Posterior vena cava (tissue), 2 donors: ENCODE measurements at regions of chr1 and their contacts with region 1.

Region 1: GRCh38 chr1:3170561-3171453 is 101.8 kb downstream of the PRDM16 start:
- DNase-seq: peak; percentile 89

Region 2: DNA sequence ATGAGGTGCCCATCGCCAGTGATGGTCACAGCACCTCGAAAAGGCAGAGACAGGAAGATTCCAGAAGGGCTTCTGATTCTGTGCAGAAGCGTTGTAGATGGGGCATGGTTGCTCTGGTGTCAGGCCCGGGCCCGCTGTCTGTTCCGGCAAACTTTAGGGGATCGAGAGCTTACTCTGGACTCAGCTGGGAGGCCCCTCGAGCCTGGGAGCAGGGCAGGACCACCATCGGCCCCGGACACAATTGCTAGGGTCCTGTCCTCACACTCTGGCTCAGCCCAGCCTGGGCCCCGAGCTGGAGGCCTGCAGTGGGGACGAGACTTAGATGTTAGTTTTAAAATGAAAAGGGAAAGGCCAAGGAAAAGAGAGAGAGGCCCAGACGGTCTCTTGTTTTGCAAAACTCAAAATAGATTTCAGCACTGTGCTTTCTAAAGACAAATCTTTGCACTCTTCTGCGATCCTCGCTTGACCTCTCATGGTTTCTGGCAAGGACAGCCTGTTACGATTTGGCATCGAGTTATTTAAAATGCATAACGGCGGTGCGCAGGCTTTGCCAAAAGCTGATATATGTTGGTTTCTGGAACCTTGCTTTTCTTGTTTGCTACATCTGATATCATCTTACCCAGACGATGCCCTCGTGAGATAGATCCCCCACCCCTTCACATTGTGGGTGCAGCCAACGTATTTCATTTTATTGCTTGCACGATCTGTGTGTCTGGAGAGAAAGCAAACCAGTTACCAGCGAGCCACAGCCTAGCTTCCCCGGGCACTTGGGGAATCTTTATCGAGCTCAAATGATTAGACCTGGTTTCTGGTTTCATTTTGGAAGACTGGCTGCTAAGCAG is 43.8 kb before region 1 on chr1:
- intact Hi-C with region 1: loop called in 1 of 2 experiments (anchors 5 kb)
- DNase-seq: no peak

Region 3: DNA sequence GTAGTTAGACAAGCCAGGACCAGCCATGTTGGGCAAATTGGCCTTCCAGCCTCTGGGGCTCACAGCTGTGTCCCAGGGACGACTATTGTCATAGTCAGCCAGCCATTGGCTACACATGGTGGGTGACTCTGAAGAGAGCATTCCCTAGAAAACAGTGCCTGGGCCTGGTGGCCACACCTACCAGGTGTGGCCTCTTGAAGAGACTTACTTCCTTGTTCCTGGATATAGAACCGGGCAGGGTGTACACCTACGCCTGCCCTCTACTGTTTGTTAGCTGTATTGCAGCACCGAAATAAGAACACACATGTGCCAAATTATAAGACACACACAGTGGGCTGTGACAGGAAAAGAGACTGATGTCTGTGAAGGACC is 149.1 kb after region 1 on chr1:
- intact Hi-C with region 1: no loop called
- DNase-seq: no peak

Region 4: DNA sequence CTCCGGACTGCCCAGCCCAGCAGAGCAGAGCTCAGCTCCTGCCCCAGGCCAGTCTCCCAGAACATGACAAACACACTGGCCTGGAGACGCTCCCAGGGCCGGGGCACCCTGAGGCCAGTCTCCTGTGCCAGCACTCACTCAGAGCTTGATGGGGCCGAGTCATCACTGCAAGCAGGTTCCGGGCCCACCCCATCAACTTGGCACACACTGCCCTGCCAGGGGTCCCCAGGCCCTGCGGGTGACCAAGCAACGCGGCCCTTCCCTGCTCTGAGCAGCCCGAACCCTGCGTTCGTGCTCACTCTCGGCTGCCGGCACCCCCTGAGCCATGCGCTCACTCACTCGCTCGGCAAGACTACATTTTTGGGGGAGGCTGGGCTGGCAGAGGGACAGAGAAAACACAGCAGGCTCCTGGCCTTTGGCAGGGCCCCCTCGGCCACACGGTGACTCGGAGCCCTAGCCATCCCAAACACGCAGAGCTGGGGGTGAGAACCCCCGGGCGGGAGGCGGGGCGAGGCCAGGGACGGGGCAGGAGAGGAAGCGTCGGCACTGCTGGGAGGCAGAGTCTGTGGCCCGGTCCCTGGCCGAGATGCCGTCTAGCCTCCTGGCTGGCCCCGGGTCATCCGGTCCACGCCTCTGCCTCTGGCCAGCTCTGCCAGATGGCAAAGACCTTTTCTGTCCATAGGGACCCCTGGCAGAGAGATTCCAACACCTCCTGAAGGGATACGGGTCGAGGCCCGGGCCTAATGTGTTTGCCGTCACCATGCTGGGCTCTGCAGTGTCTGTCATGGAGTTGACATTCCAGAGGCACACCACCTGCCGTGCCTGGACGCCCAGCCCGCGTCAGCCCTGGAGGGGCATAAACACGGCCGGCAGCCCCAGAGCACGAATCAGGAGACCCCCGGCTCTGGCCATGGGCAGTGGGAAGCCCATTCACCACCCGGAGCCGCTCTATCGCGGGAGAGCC is 372.6 kb after region 1 on chr1:
- intact Hi-C with region 1: loop called in 1 of 2 experiments (anchors 10 kb)
- DNase-seq: peak; percentile 95